IMR-90 (cell line): ENCODE measurements at regions of chr5 and their contacts with region 1.

Region 1: GRCh38 chr5:121006217-121006616 is 542.1 kb downstream of the PRR16 start:
- DNase-seq: peak; percentile 0
- ATAC-seq: no peak
- H3K4me3 ChIP-seq: no peak overlapping the region
- H3K27ac ChIP-seq: no peak overlapping the region
- H3K4me1 ChIP-seq: no peaks in the 10 kb centered on the region
- H3K27me3 ChIP-seq: no peaks in the 10 kb centered on the region
- CTCF ChIP-seq: no peak
- POLR2A ChIP-seq: no peak
- RAD21 ChIP-seq: no peak

Region 2: GRCh38 chr5:121121786-121122185 is 115.6 kb after region 1 on chr5:
- CTCF ChIA-PET with region 1: no interaction called
- POLR2A ChIA-PET with region 1: no interaction called
- dilution Hi-C with region 1: no loop called
- in situ Hi-C with region 1: no loop called
- intact Hi-C with region 1: loop called (anchors 5 kb)
- DNase-seq: no peak
- ATAC-seq: no peak
- H3K4me3 ChIP-seq: no peak overlapping the region
- H3K27ac ChIP-seq: no peak overlapping the region
- H3K4me1 ChIP-seq: no peaks in the 10 kb centered on the region
- H3K27me3 ChIP-seq: no peaks in the 10 kb centered on the region
- CTCF ChIP-seq: no peak
- POLR2A ChIP-seq: no peak
- RAD21 ChIP-seq: no peak